B cell (primary cell): ENCODE measurements at regions of chr4 and their contacts with region 1.

Region 1: DNA sequence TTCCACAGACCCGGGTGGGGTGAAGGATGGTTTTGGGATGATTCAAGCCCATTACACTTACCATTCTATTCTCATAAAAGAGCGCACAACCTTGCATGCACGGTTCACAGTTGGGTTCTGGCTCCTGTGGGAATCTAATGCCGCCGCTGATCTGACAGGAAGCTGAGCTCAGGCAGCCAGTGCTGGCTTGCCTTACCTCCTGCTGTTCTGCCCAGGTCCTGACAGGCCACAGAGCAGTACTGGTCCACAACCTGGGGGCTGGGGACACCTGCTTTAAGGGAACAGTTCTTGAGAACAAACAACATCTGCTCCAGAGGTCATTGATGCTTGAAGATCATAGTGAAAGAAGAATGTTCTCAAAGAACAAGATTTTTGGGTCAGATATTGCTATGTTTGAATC is 8.0 kb upstream of the HS3ST1 start:
- DNase-seq: peak; percentile 27
- ATAC-seq: peak; percentile 66
- H3K4me3 ChIP-seq: peak overlapping the region in 3 of 5 experiments; percentile 1 to 45 (median 35)
- H3K4me3 Mint-ChIP-seq: peak overlapping the region; percentile 61
- H3K27ac ChIP-seq: peak overlapping the region; percentile 71 to 88
- H3K27ac Mint-ChIP-seq: peak overlapping the region; percentile 90
- H3K4me1 ChIP-seq: peaks cover 27 to 42% of the 10 kb centered on the region in 2 donors
- H3K4me1 Mint-ChIP-seq: peaks cover 73% of the 10 kb centered on the region
- H3K27me3 ChIP-seq: no peaks in the 10 kb centered on the region
- H3K27me3 Mint-ChIP-seq: no peaks in the 10 kb centered on the region
- CTCF ChIP-seq: no peak

Region 2: GRCh38 chr4:10671366-10671765 is 765.3 kb before region 1 on chr4:
- CTCF ChIA-PET with region 1: no interaction called
- POLR2A ChIA-PET with region 1: no interaction called
- intact Hi-C with region 1: loop called (anchors 10 kb)
- DNase-seq: peak; percentile 56
- ATAC-seq: peak; percentile 86
- H3K4me3 ChIP-seq: no peak overlapping the region
- H3K4me3 Mint-ChIP-seq: no peak overlapping the region
- H3K27ac ChIP-seq: peak overlapping the region; percentile 37 to 62
- H3K27ac Mint-ChIP-seq: peak overlapping the region; percentile 65
- H3K4me1 ChIP-seq: peaks cover 22 to 27% of the 10 kb centered on the region in 2 donors
- H3K4me1 Mint-ChIP-seq: peaks cover 27% of the 10 kb centered on the region
- H3K27me3 ChIP-seq: no peaks in the 10 kb centered on the region
- H3K27me3 Mint-ChIP-seq: no peaks in the 10 kb centered on the region
- CTCF ChIP-seq: no peak

Region 3: GRCh38 chr4:11424000-11424399 is 12.7 kb before region 1 on chr4:
- CTCF ChIA-PET with region 1: interaction called, 29 read pairs
- POLR2A ChIA-PET with region 1: interaction called, 3 read pairs
- intact Hi-C with region 1: no loop called
- DNase-seq: peak; percentile 71
- ATAC-seq: no peak
- H3K4me3 ChIP-seq: no peak overlapping the region
- H3K4me3 Mint-ChIP-seq: no peak overlapping the region
- H3K27ac ChIP-seq: no peak overlapping the region
- H3K27ac Mint-ChIP-seq: no peak overlapping the region
- H3K4me1 ChIP-seq: peaks cover 40 to 42% of the 10 kb centered on the region in 2 donors
- H3K4me1 Mint-ChIP-seq: peaks cover 73% of the 10 kb centered on the region
- H3K27me3 ChIP-seq: no peaks in the 10 kb centered on the region
- H3K27me3 Mint-ChIP-seq: no peaks in the 10 kb centered on the region
- CTCF ChIP-seq: peak; percentile 77

Region 4: DNA sequence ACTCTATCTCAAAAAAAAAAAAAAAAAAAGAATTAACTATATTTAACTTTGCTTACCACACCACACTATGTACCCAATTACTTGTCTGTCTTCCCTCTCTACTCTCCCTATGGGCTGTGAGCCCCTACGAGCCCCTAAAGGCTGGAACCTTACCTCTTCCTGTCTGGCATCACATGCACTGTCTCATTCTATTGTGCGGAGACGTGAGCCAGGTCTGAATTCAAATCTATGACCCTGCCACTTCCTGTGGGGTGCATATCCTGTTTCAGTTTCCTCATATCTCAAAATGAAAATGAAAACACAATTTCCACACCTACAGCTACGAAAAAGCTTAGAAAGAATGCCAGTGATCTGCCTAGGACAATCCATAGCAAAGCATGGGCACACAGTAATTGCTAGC is 34.9 kb after region 1 on chr4:
- CTCF ChIA-PET with region 1: interaction called, 8 read pairs
- POLR2A ChIA-PET with region 1: no interaction called
- intact Hi-C with region 1: loop called (anchors 2 kb)
- DNase-seq: peak; percentile 81
- ATAC-seq: peak; percentile 82
- H3K4me3 ChIP-seq: peak overlapping the region; percentile 2 to 59 (median 53)
- H3K4me3 Mint-ChIP-seq: peak overlapping the region; percentile 86
- H3K27ac ChIP-seq: peak overlapping the region; percentile 74 to 81
- H3K27ac Mint-ChIP-seq: peak overlapping the region; percentile 96
- H3K4me1 ChIP-seq: peaks cover 39 to 42% of the 10 kb centered on the region in 2 donors
- H3K4me1 Mint-ChIP-seq: peaks cover 47% of the 10 kb centered on the region
- H3K27me3 ChIP-seq: no peaks in the 10 kb centered on the region
- H3K27me3 Mint-ChIP-seq: no peaks in the 10 kb centered on the region
- CTCF ChIP-seq: no peak

Region 5: GRCh38 chr4:11623726-11624037 is 187.0 kb after region 1 on chr4:
- CTCF ChIA-PET with region 1: no interaction called
- POLR2A ChIA-PET with region 1: no interaction called
- intact Hi-C with region 1: no loop called
- DNase-seq: peak; percentile 17
- ATAC-seq: no peak
- H3K4me3 ChIP-seq: no peak overlapping the region
- H3K4me3 Mint-ChIP-seq: no peak overlapping the region
- H3K27ac ChIP-seq: no peak overlapping the region
- H3K27ac Mint-ChIP-seq: no peak overlapping the region
- H3K4me1 ChIP-seq: peaks cover 0 to 4% of the 10 kb centered on the region in 2 donors
- H3K4me1 Mint-ChIP-seq: peaks cover 7% of the 10 kb centered on the region
- H3K27me3 ChIP-seq: no peaks in the 10 kb centered on the region
- H3K27me3 Mint-ChIP-seq: no peaks in the 10 kb centered on the region
- CTCF ChIP-seq: no peak